HepG2 (cell line): ENCODE measurements at regions of chr20 and their contacts with region 1.

Region 1: DNA sequence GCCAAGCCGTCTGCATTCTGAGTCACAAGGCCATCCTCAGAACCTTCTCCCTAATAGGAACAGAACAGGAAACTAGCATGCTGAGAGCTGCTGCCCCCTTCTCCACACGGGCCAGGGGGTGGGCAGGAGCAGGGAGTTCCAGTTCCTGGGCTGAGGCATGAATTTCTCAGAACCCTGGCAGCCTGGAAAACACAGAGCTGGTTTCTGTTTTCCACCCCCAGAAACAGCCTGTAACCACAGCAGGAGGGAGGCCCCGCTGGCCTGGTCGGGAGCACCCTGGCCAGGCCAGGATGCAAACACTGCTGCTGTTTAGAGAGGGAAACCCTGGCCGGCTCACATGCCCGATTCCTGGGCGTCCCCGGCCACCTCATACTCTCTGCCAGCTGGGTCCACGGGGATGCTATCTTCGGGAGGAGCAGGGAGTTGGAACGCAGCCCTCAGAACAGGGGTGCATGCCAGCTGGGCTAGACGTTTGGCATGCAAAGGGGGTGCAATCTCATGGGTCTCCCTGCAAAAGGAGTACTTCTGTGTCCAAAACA is 130.1 kb downstream of the NFATC2 start:
- DNase-seq: no peak
- ATAC-seq: peak; percentile 71
- H3K4me3 ChIP-seq: peak overlapping the region in 1 of 3 experiments; percentile 45; a peak in 1 of 6 replicates
- H3K27ac ChIP-seq: peak overlapping the region; percentile 53
- H3K4me1 ChIP-seq: peaks cover 15% of the 10 kb centered on the region
- H3K27me3 ChIP-seq: no peaks in the 10 kb centered on the region
- CTCF ChIP-seq: no peak
- EP300 ChIP-seq: no peak
- POLR2A ChIP-seq: no peak
- RAD21 ChIP-seq: no peak

Region 2: DNA sequence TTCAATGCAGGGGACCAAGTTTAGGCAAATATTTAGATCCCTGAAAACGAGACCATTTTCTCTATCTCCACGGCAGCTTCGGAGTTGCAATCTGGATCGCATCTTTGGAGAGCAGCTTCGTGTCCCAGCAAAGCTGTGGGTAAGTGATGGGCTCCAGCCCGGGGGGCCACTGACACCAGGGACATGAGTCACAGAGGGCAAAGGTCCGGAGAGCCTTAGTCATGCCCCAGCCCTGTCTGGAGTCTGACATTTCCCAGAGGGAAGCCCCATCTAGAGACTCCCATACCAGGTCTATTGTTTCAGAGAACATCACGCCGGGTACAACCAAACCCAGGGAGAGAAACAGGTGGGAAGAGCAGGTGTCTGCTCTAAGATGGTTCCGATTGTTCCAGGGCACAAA is 34.3 kb after region 1 on chr20:
- CTCF ChIA-PET with region 1: no interaction called
- POLR2A ChIA-PET with region 1: no interaction called
- in situ Hi-C with region 1: no loop called
- intact Hi-C with region 1: loop called (anchors 1 kb)
- DNase-seq: peak; percentile 82
- ATAC-seq: peak; percentile 96
- H3K4me3 ChIP-seq: no peak overlapping the region
- H3K27ac ChIP-seq: no peak overlapping the region
- H3K4me1 ChIP-seq: peaks cover 23% of the 10 kb centered on the region
- H3K27me3 ChIP-seq: no peaks in the 10 kb centered on the region
- CTCF ChIP-seq: 0 out of 2 replicates have a peak, but pooled peaks have one; percentile 13
- EP300 ChIP-seq: peak; percentile 44 to 63; a peak in 2 of 4 replicates
- POLR2A ChIP-seq: no peak
- RAD21 ChIP-seq: 0 out of 2 replicates have a peak, but pooled peaks have one; percentile 47

Region 3: GRCh38 chr20:51500311-51500710 is 87.9 kb after region 1 on chr20:
- CTCF ChIA-PET with region 1: no interaction called
- POLR2A ChIA-PET with region 1: no interaction called
- in situ Hi-C with region 1: no loop called
- intact Hi-C with region 1: no loop called
- DNase-seq: no peak
- ATAC-seq: no peak
- H3K4me3 ChIP-seq: no peak overlapping the region
- H3K27ac ChIP-seq: no peak overlapping the region
- H3K4me1 ChIP-seq: no peaks in the 10 kb centered on the region
- H3K27me3 ChIP-seq: no peaks in the 10 kb centered on the region
- CTCF ChIP-seq: no peak
- EP300 ChIP-seq: no peak
- POLR2A ChIP-seq: no peak
- RAD21 ChIP-seq: no peak